ENCODE measurements at regions of chr5 and their contacts with region 1.

Region 1: GRCh38 chr5:923281-923873 is 30.7 kb downstream of the TRIP13 start:
- DNase-seq: peak; percentile 87 to 89 (median 89)
- ATAC-seq: peak; percentile 92 to 99 (median 96)
- H3K4me3 ChIP-seq: no peak overlapping the region
- H3K27ac ChIP-seq: no peak overlapping the region
- H3K4me1 ChIP-seq: peaks cover 0 to 7% (median 0%) of the 10 kb centered on the region in 4 donors
- H3K27me3 ChIP-seq: peaks cover 0 to 14% of the 10 kb centered on the region in 2 donors
- CTCF ChIP-seq: peak; percentile 90 to 93 (median 91)
- POLR2A ChIP-seq: no peak

Region 2: GRCh38 chr5:1140171-1140817 is 216.9 kb after region 1 on chr5:
- intact Hi-C with region 1: loop called in 1 of 2 experiments (anchors 5 kb)
- DNase-seq: peak; percentile 88 to 91 (median 89)
- ATAC-seq: peak; percentile 92 to 94 (median 94)
- H3K4me3 ChIP-seq: no peak overlapping the region
- H3K27ac ChIP-seq: no peak overlapping the region
- H3K4me1 ChIP-seq: peaks cover 0 to 5% (median 0%) of the 10 kb centered on the region in 4 donors
- H3K27me3 ChIP-seq: no peaks in the 10 kb centered on the region
- CTCF ChIP-seq: peak; percentile 93 to 96 (median 95)
- POLR2A ChIP-seq: no peak

Region 3: GRCh38 chr5:1167728-1168709 is 244.6 kb after region 1 on chr5:
- intact Hi-C with region 1: loop called in 1 of 2 experiments (anchors 10 kb)
- DNase-seq: peak; percentile 71 to 81 (median 74)
- ATAC-seq: peak; percentile 90 to 95 (median 94)
- H3K4me3 ChIP-seq: no peak overlapping the region
- H3K27ac ChIP-seq: no peak overlapping the region
- H3K4me1 ChIP-seq: peaks cover 0 to 8% (median 0%) of the 10 kb centered on the region in 4 donors
- H3K27me3 ChIP-seq: no peaks in the 10 kb centered on the region
- CTCF ChIP-seq: peak; percentile 59 to 80 (median 66)
- POLR2A ChIP-seq: no peak

Region 4: DNA sequence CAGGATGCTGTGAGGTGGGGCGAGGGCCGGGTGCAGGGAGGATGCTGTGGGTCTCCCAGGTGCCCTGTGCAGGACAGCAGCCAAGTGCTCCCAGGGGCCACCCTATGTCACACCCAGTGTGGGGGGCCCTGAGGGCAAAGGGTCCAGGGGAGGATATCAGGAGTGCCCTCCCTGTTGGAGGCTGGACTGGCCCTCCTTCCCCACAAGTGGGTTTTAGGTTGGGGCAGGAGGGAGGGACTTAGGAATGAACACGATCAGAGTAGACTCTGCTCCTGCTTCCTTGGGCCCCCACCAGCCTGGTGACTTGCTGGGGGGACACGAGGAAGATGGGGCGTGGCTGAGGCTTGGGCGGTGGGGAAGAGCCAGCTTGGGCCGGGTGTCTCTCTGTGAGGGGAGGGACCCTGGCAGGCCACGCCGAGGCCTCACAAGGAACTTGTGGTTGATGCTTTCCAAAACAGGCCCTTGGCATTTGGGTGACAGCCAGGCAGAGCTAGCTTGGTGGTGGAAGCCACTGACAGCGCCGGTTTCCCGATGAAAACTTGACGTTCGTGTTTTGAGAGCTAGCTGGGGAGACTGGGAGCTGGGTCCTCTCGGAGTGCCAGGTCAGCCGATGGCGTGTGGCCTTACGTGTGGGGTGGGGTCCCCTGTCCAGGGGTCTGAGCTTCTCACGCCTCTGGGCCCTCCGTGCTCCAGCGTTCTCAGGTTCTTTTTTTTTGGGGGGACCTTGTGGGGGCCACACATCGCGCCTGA is 729.4 kb after region 1 on chr5:
- intact Hi-C with region 1: loop called in 1 of 2 experiments (anchors 10 kb)
- DNase-seq: no peak
- ATAC-seq: no peak
- H3K4me3 ChIP-seq: no peak overlapping the region
- H3K27ac ChIP-seq: no peak overlapping the region
- H3K4me1 ChIP-seq: no peaks in the 10 kb centered on the region
- H3K27me3 ChIP-seq: peaks cover 0 to 8% of the 10 kb centered on the region in 2 donors
- CTCF ChIP-seq: no peak
- POLR2A ChIP-seq: no peak